Activated T-helper 1 cell treated with anti-CD3 and anti-CD28 coated beads, Interleukin-12 subunit alpha, Interleukin-12 subunit beta, Interleukin-2, Interleukin-4 antibody, amounts not matched to agents 30 ng/mL and 10 ng/mL and 1 ng/mL, durations not matched to agents 14 hours and 24 hours and 36 hours (primary cell): ENCODE measurements at regions of chr15 and their contacts with region 1.

Region 1: DNA sequence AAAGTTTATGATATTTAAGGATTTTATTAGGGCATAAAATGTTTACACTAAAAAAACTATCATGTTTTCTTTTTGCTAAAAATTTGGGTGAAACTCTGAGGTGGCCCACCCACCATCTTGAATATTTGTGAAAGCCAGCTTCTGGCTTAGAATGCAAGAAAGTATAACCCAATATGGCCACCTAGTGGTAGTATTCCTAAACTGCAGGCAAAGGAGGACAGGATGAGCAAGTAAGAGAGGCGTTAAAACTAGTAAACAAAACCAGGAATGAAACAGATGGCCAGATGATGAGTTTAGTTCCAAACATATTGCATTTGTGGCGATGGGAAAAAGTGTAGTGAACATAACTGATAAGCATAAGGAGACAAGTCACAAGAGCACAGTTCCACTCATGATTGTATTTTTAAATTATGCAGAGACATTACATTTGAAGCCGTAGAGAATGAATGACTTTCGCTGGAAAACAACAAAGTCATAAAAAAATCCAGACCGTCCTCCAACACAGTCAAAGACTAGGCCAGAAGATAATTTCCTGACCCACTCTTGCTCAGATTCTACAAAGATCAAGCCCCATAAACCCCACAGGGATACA is 103.3 kb upstream of the PRTG start:
- DNase-seq: peak; percentile 32
- H3K4me3 Mint-ChIP-seq: no peak overlapping the region
- H3K27ac Mint-ChIP-seq: no peak overlapping the region
- H3K4me1 Mint-ChIP-seq: no peaks in the 10 kb centered on the region
- H3K27me3 Mint-ChIP-seq: no peaks in the 10 kb centered on the region

Region 2: DNA sequence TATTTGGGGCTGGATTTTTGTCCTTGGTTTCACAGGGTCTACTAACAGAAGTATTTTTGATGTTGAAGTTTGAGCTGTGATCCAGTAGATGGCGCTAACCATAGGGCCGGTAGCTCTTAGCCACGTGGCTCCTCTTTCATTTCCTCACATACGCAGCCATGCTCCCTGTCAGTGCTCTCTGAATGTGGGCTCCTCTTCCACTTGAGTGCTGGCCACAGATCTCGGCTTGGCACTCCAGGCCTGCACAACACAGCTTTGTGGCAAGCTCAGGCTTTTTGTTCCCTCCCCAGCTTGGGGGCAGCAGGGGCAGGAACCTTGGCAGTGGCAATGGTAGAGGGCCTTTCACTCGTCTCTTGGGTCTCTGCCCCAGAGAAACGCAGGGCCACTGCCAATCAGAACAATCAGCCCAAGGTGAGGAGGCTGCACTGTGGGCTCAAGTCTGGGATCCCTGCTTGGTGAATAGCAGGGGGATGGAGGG is 319.6 kb before region 1 on chr15:
- intact Hi-C with region 1: loop called (anchors 10 kb)
- DNase-seq: no peak
- H3K4me3 Mint-ChIP-seq: no peak overlapping the region
- H3K27ac Mint-ChIP-seq: no peak overlapping the region
- H3K4me1 Mint-ChIP-seq: no peaks in the 10 kb centered on the region
- H3K27me3 Mint-ChIP-seq: peaks cover 6% of the 10 kb centered on the region

Region 3: DNA sequence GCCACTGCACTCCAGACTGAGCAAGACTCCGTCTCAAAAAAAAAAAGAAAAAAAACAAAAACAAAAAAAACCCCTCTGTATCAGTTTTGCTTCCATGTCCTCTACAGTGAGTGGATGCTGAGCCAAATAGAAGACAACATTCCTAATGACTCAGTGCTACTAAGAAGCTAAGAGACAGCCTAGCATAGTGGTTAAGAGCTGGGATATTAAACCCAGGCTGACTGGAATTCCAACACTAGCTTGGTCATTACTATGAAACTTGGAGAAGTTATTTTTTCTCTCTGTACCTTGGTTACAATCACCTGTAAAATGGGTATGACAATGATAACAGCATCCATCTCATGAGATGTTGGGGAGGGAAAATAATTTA is 197.2 kb before region 1 on chr15:
- intact Hi-C with region 1: loop called (anchors 1 kb)
- DNase-seq: no peak
- H3K4me3 Mint-ChIP-seq: no peak overlapping the region
- H3K27ac Mint-ChIP-seq: no peak overlapping the region
- H3K4me1 Mint-ChIP-seq: no peaks in the 10 kb centered on the region
- H3K27me3 Mint-ChIP-seq: peaks cover 7% of the 10 kb centered on the region

Region 4: DNA sequence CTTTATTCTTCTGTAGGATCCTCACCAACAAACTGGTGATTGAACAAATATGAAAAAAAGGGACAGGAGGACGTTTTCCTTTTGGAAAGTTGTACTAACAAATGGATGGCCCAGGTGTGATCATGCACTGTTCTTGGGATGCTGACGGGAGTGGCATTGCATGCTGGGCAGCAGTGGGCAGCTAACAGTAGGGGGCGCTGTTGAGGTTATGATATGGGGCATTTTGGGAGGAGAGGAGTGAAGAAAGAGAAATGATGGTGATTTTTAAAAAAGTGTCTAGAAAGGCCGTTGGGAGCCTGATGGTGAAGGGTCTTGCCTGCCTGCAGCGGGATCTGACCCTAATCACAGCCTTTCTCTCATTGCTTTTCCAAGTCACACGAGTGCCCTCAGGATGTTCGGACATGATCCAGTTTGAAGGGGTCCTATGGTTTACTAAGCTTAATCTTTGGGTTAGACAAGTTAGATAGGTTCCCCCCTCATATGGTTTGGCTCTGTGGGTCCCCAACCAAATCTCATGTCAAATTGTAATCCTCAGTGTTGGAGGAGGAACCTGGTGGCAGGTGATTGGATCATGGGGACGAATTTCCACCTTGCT is 57.0 kb before region 1 on chr15:
- intact Hi-C with region 1: loop called (anchors 1 kb)
- DNase-seq: peak; percentile 23
- H3K4me3 Mint-ChIP-seq: no peak overlapping the region
- H3K27ac Mint-ChIP-seq: no peak overlapping the region
- H3K4me1 Mint-ChIP-seq: no peaks in the 10 kb centered on the region
- H3K27me3 Mint-ChIP-seq: peaks cover 3% of the 10 kb centered on the region